Pancreas (tissue), 10 donors: ENCODE measurements at regions of chr12 and their contacts with region 1.

Region 1: DNA sequence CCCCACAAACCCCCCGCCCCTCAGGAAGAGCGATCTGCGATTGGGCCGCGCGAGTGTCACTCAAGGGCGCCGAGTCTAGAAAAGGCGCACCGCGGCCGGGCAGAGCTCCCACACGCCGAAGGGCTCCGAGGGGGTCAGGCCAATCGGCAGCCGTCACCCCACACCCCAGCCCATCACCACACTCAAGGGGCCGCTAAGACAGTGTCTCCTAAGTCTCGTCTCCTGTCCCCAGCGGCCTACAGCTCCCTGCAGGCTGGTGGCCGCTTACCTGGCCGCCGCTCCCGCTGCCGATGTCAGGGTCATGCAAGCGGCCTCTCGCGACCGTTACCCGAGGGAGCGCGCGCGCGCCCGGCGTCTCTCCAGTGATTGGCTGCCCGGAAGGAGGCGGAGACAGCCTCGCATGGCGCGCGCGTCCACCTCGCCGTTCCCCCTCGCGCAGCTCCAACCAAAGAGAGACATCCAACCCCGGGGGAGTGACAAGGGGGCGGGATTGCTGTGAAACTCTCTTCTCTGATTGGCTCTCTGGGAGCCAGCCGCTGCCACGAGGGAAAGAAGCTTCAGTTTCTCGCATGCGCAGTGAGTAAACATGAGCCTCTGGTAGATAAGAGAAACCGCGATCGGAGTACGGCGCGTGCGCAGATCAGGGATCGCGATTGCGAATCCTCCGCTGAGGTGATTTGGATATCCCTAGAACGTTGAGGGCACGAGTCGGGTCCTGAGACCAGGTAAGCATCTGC is at the starts of genes MPHOSPH9 and MTRFR:
- DNase-seq: peak; percentile 97 to 99 (median 99)
- ATAC-seq: peak; percentile 96 to 98 (median 97)
- H3K4me3 ChIP-seq: peak within 1 kb of the TSS; percentile 78 to 88 (median 83)
- H3K27ac ChIP-seq: peak within 1 kb of the TSS; percentile 76 to 83 (median 80)
- H3K4me1 ChIP-seq: peaks cover 3 to 15% (median 13%) of the 10 kb centered on the region in 3 donors
- H3K27me3 ChIP-seq: no peaks in the 10 kb centered on the region
- CTCF ChIP-seq: no peak
- total RNA-seq, gene MPHOSPH9: 4.8 to 13.4 (median 9.5) TPM
- total RNA-seq, gene MTRFR: 2.9 to 7.5 (median 4.1) TPM

Region 2: DNA sequence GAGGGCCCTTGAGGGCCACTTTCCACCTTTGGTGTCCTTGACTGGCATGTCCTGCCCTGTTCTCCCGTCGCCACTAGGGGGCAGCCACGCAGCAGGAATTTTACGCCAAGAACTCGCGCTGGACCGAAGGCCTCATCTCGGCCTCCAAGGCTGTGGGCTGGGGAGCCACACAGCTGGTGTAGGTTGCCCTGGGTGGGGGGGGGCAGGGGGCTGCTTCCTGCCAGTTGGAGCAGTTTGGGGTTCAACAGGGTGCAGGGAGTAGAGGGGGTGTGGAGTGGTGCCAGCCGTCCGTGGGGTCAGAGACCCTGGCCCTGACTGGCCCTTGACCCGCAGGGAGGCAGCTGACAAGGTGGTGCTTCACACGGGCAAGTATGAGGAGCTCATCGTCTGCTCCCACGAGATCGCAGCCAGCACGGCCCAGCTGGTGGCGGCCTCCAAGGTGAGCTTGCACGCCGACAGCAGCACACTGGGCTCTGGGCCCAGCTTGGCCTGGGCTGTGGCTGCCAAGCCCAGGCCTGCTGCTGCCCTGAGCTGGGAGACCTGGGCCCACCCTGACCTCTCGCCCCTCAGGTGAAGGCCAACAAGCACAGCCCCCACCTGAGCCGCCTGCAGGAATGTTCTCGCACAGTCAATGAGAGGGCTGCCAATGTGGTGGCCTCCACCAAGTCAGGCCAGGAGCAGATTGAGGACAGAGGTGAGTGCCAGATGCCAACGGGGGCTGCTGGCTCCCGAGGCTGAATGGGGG is 372.5 kb before region 1 on chr12:
- intact Hi-C with region 1: loop called in 1 of 3 experiments (anchors 10 kb)
- DNase-seq: peak; percentile 85 to 96 (median 92)
- ATAC-seq: peak; percentile 73 to 84 (median 80)
- H3K4me3 ChIP-seq: no peak overlapping the region
- H3K27ac ChIP-seq: peak overlapping the region; percentile 31 to 69 (median 54)
- H3K4me1 ChIP-seq: peaks cover 8 to 17% (median 14%) of the 10 kb centered on the region in 3 donors
- H3K27me3 ChIP-seq: no peaks in the 10 kb centered on the region
- CTCF ChIP-seq: peak; percentile 86 to 93 (median 91)

Region 3: DNA sequence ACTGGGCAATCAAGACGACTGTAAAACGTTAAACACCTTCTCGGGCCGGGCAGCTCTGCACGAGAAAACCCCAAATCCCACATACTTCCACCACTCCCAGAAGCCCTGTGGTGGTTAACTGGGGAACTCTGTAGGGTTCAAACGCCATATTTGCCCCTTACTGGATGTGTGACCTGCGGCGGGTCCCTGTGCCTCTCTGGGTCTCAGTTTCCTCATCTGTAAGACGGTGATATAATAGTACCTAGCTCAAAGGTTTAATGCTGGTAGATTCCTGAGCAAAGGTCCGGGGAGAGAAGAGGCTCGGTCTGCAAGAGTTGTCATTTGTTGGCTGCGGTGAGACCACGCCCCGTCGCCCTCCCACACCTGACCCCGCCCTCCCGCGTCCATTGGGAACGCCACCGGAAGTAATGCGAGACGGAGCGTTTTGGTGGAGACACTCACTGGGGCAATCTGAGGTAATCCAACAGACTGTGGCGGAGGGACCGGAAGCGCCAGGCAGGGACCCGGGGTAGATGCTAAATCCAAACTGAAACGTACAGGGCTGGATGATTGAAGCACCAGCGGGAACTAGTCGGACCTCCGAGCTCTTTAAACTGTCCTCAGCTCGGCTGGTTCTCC is 258.6 kb before region 1 on chr12:
- intact Hi-C with region 1: loop called in 1 of 3 experiments (anchors 10 kb)
- DNase-seq: peak; percentile 96 to 99 (median 98)
- ATAC-seq: peak; percentile 91 to 95 (median 92)
- H3K4me3 ChIP-seq: peak overlapping the region; percentile 61 to 84 (median 78)
- H3K27ac ChIP-seq: peak overlapping the region; percentile 85 to 98 (median 96)
- H3K4me1 ChIP-seq: peaks cover 9 to 30% (median 21%) of the 10 kb centered on the region in 3 donors
- H3K27me3 ChIP-seq: no peaks in the 10 kb centered on the region
- CTCF ChIP-seq: no peak

Region 4: GRCh38 chr12:122980183-122981046 is 252.6 kb before region 1 on chr12 and contains the start of gene ARL6IP4:
- intact Hi-C with region 1: loop called in 2 of 3 experiments (anchors 10 kb)
- DNase-seq: peak in 5 of 6 donors; percentile 46 to 90 (median 68)
- ATAC-seq: peak; percentile 76 to 83 (median 80)
- H3K4me3 ChIP-seq: peak within 1 kb of the TSS; percentile 97 to 99 (median 98)
- H3K27ac ChIP-seq: peak within 1 kb of the TSS; percentile 68 to 82 (median 76)
- H3K4me1 ChIP-seq: peaks cover 18 to 64% (median 32%) of the 10 kb centered on the region in 3 donors
- H3K27me3 ChIP-seq: no peaks in the 10 kb centered on the region
- CTCF ChIP-seq: no peak
- total RNA-seq, gene ARL6IP4: 85.3 to 129 (median 101) TPM

Region 5: DNA sequence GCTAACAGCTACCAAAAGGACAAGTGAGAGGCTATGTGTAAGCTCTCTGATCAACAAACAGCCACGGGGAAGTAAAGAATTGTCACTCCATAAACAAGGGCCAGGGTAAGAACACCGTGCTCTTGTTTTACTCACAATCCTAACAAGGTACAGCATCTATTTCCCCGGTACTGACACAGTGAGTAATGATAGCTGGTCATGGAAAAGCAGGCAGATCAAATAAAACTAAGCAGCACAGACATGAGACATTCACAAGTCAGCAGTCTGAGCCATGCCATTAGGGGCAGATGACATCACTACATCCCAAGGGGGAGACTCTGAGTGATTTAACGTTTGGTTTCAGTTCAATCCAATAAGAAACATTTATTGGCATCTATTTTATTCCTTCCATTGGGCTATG is 198.1 kb before region 1 on chr12:
- intact Hi-C with region 1: loop called in 2 of 3 experiments (anchors 5 to 10 kb)
- DNase-seq: no peak
- ATAC-seq: peak in 2 of 4 donors; percentile 57 to 67
- H3K4me3 ChIP-seq: no peak overlapping the region
- H3K27ac ChIP-seq: no peak overlapping the region
- H3K4me1 ChIP-seq: no peaks in the 10 kb centered on the region
- H3K27me3 ChIP-seq: no peaks in the 10 kb centered on the region
- CTCF ChIP-seq: no peak

Region 6: DNA sequence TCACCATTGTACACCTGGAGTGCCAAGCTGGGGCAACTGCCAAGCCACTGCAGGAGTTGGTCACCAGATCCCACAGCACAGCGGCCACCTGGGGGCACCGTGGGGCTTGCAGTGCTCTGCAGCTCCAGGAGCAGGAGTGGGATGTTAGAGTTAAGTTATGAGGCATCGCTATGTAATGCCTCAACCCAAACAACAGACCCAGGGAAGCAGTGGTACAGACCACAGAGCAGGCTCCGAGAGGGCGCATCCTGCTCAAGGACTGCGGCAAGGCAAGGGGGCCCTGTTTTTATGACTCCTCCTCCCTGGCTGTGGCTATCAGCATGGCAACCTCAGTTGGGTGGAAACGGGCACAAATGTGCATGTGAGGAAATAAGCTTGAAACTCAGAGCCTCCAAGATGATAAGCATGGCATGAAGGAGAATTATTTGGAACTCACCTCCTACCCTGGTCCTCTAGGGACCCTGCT is 189.4 kb before region 1 on chr12:
- intact Hi-C with region 1: loop called in 2 of 3 experiments (anchors 5 to 10 kb)
- DNase-seq: peak; percentile 64 to 90 (median 81)
- ATAC-seq: peak; percentile 88 to 99 (median 94)
- H3K4me3 ChIP-seq: no peak overlapping the region
- H3K27ac ChIP-seq: no peak overlapping the region
- H3K4me1 ChIP-seq: no peaks in the 10 kb centered on the region
- H3K27me3 ChIP-seq: no peaks in the 10 kb centered on the region
- CTCF ChIP-seq: peak in 3 of 4 donors; percentile 44 to 53 (median 50)

Region 7: DNA sequence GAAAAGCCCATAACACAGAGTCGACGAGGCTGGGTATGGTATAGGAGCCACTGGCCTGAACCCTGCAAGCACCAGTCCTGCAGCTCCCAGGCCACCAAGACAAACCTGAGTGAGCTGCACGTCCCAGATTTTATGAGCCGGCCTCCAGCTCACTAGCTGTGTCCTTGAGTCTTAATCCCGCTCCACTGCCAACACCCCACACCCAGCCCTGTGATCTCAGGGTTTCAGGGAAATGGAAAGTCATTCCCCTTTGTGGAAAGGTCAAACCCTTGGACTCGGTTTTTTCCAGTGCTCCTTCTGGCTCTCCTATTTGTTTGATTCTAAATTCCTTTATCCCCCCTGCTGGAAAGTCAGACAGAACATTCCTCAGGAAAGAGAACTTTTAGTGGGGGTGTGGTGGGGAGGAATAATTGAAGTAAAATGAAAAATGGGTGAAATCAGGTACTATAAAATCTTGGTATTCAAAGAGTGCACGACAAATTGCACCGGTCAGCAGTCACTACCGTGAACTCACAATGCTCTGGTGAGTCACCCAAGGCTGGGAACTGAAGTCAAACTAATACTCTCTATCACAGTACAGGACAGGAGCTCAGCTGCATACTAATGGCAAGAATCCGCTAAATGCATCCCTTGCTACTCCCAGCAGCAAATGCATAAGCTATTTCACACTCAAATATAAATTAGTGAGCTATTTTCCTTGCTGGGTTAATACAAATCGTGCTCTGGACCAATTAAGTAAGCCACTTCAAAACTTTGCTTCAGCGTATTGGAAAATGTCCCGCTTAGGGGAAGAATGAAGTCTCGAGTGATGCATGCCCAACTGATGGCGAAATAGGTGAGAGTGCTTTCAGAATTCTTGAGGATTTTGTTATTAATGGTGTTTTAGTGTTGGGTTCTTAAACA is 91.1 kb before region 1 on chr12:
- intact Hi-C with region 1: no loop called
- DNase-seq: peak in 5 of 6 donors; percentile 32 to 77 (median 64)
- ATAC-seq: peak; percentile 76 to 88 (median 86)
- H3K4me3 ChIP-seq: no peak overlapping the region
- H3K27ac ChIP-seq: peak overlapping the region in 3 of 4 donors; percentile 44 to 82 (median 56)
- H3K4me1 ChIP-seq: peaks cover 9 to 36% (median 15%) of the 10 kb centered on the region in 3 donors
- H3K27me3 ChIP-seq: no peaks in the 10 kb centered on the region
- CTCF ChIP-seq: no peak